ENCODE measurements at regions of chr12 and their contacts with region 1.

Region 1: GRCh38 chr12:32755654-32756475 is at the start of gene YARS2:
- DNase-seq: peak; percentile 92 to 95
- ATAC-seq: peak; percentile 98 to 99 (median 99)
- H3K4me3 ChIP-seq: peak within 1 kb of the TSS; percentile 97
- H3K27ac ChIP-seq: peak within 1 kb of the TSS; percentile 93
- H3K4me1 ChIP-seq: peaks cover 10% of the 10 kb centered on the region
- H3K27me3 ChIP-seq: no peaks in the 10 kb centered on the region
- CTCF ChIP-seq: peak; percentile 83
- total RNA-seq, gene YARS2: 11.0 to 17.3 (median 13.2) TPM

Region 2: GRCh38 chr12:32765906-32766305 is 10.0 kb after region 1 on chr12:
- intact Hi-C with region 1: no loop called
- DNase-seq: no peak
- ATAC-seq: no peak
- H3K4me3 ChIP-seq: no peak overlapping the region
- H3K27ac ChIP-seq: no peak overlapping the region
- H3K4me1 ChIP-seq: no peaks in the 10 kb centered on the region
- H3K27me3 ChIP-seq: peaks cover 0 to 3% (median 2%) of the 10 kb centered on the region in 3 donors
- CTCF ChIP-seq: no peak

Region 3: DNA sequence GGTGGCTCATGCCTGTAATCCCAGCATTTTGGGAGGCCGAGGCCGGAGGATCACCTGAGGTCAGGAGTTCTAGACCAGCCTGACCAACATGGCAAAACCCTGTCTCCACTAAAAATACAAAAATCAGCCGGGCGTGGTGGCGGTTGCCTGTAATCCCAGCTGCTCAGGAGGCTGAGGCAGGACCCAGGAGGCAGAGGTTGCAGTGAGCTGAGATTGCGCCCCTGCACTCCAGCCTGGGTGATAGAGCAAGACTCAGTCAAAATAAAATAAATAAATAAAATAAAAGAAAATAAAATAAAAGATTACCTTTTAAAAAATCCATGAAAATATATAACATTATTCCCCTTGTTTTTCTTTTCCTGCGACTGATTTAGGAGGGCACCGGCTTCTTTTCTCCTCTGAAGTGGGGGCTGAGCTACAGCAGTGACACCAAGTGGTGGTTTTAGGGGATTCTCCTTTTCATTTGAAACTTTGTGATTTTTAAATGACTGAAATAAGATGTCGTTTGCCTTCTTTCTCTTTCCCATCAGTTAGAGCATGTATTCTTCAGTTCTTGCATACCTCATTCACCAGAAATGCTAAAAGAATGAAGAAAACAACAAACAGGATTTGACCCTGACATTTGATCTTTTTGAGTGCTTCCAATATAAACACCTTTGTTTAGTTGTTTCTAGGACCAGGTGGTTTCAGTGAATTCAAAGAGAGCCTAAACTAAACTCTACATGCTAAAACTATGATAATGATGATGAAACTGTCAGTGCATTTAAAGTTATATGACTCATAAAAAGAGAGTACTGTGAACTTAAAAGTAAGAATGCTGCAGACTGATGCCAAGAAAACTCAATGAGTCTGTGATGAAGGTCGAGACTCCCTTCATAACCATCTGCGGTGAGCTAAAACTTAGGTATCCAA is 163.3 kb after region 1 on chr12:
- intact Hi-C with region 1: loop called (anchors 2 to 5 kb)
- DNase-seq: no peak
- ATAC-seq: peak in 1 of 4 donors; percentile 58
- H3K4me3 ChIP-seq: no peak overlapping the region
- H3K27ac ChIP-seq: no peak overlapping the region
- H3K4me1 ChIP-seq: no peaks in the 10 kb centered on the region
- H3K27me3 ChIP-seq: peaks cover 0 to 2% (median 0%) of the 10 kb centered on the region in 3 donors
- CTCF ChIP-seq: peak; percentile 43

Region 4: GRCh38 chr12:34022079-34022830 is 1266.4 kb after region 1 on chr12 and contains the start of gene ALG10:
- intact Hi-C with region 1: loop called (anchors 2 to 5 kb)
- DNase-seq: peak; percentile 97 to 98
- ATAC-seq: peak; percentile 99 to 100 (median 100)
- H3K4me3 ChIP-seq: peak within 1 kb of the TSS; percentile 74
- H3K27ac ChIP-seq: peak within 1 kb of the TSS; percentile 78
- H3K4me1 ChIP-seq: peaks cover 9% of the 10 kb centered on the region
- H3K27me3 ChIP-seq: no peaks in the 10 kb centered on the region
- CTCF ChIP-seq: peak; percentile 65
- total RNA-seq, gene ALG10: 2.4 to 5.1 (median 2.7) TPM

Measured in psoas muscle (tissue), 8 donors.